ENCODE measurements at regions of chr17 and their contacts with region 1.

Region 1: GRCh38 chr17:57892146-57892828 is 42.4 kb upstream of the MRPS23 start:
- DNase-seq: peak; percentile 77
- ATAC-seq: peak; percentile 98
- H3K4me3 Mint-ChIP-seq: no peak overlapping the region
- H3K27ac Mint-ChIP-seq: no peak overlapping the region
- H3K4me1 Mint-ChIP-seq: no peaks in the 10 kb centered on the region
- H3K27me3 Mint-ChIP-seq: peaks cover 36% of the 10 kb centered on the region
- CTCF ChIP-seq: peak; percentile 62

Region 2: DNA sequence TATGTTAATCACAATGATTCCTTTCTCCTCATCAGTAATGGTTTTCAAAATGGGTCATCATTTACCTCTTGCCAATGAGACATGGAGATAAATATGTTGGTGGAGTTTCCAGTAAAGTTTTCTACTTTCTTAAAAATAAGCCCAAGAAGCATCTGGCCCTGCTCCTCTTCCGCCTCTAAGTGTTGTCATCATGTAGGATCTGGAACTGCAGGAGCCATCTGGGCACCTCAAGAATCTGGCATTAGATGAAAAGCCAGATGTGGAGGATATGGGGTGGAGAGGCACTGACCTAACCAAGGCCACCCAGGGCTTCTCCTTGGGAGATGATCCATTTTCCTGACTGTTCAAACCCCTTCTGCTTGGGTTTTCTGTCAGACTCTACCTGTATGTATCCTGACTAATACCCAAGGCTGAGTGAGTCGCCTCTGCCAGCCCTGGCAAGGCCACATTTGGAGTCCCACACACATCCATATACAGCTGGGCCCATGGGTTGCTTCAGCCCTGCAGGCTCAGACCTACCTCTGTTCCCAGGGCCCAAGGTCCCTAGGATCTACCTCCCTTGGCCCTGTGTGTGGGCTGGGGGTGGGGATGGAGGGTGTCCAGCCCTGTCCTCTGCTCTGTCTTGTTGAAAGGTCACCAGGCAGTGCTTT is 171.8 kb before region 1 on chr17:
- CTCF ChIA-PET with region 1: no interaction called
- POLR2A ChIA-PET with region 1: no interaction called
- intact Hi-C with region 1: no loop called
- DNase-seq: no peak
- ATAC-seq: no peak
- H3K4me3 Mint-ChIP-seq: no peak overlapping the region
- H3K27ac Mint-ChIP-seq: no peak overlapping the region
- H3K4me1 Mint-ChIP-seq: peaks cover 25% of the 10 kb centered on the region
- H3K27me3 Mint-ChIP-seq: peaks cover 14% of the 10 kb centered on the region
- CTCF ChIP-seq: no peak

Region 3: GRCh38 chr17:57861000-57861789 is 31.1 kb before region 1 on chr17:
- CTCF ChIA-PET with region 1: interaction called, 7 read pairs
- POLR2A ChIA-PET with region 1: interaction called, 3 read pairs
- intact Hi-C with region 1: loop called (anchors 2 kb)
- DNase-seq: no peak
- ATAC-seq: peak; percentile 69
- H3K4me3 Mint-ChIP-seq: peak overlapping the region; percentile 79
- H3K27ac Mint-ChIP-seq: no peak overlapping the region
- H3K4me1 Mint-ChIP-seq: peaks cover 14% of the 10 kb centered on the region
- H3K27me3 Mint-ChIP-seq: peaks cover 21% of the 10 kb centered on the region
- CTCF ChIP-seq: no peak

Region 4: GRCh38 chr17:57902800-57903759 is 10.8 kb after region 1 on chr17:
- CTCF ChIA-PET with region 1: interaction called, 10 read pairs
- POLR2A ChIA-PET with region 1: interaction called, 5 read pairs
- intact Hi-C with region 1: no loop called
- DNase-seq: no peak
- ATAC-seq: peak; percentile 19
- H3K4me3 Mint-ChIP-seq: peak overlapping the region; percentile 39
- H3K27ac Mint-ChIP-seq: no peak overlapping the region
- H3K4me1 Mint-ChIP-seq: peaks cover 33% of the 10 kb centered on the region
- H3K27me3 Mint-ChIP-seq: peaks cover 14% of the 10 kb centered on the region
- CTCF ChIP-seq: no peak

Region 5: DNA sequence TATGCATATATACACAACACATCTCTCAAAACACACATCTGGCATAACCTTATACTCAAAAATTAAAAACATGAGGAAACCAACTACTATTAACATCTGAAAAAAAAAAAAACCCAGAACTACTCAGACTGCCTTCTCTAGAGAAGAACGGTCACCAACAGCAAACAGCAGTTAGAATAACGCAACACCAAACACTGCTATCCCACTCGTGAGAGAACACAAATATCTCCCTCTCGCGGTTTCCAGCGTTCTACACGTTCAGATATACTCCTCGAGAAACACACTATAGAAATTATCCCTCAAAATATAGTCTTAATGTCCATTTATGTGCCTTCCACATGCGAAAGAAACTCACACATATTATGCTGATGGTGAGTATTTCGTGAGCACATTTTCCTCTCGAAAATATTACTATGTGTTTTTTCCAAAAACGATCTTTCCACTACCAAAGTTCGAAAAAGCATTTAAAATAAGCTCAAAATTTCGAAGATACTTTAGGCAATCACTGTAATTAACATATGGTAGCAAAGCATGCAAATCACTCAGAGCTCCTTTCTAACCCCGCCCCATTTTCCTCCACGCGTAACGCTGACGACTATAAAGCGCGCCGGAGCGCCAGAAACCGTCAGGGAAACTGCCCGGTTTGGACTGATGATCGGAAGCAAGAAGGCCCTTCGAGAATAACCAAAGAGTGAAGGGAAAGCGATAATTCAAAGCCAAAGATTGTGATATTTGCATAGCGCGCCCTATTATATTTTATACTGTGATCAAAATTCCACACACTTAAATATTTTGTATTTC is 739.4 kb after region 1 on chr17:
- CTCF ChIA-PET with region 1: no interaction called
- POLR2A ChIA-PET with region 1: no interaction called
- intact Hi-C with region 1: no loop called
- DNase-seq: peak; percentile 91
- ATAC-seq: peak; percentile 83
- H3K4me3 Mint-ChIP-seq: no peak overlapping the region
- H3K27ac Mint-ChIP-seq: no peak overlapping the region
- H3K4me1 Mint-ChIP-seq: peaks cover 3% of the 10 kb centered on the region
- H3K27me3 Mint-ChIP-seq: no peaks in the 10 kb centered on the region
- CTCF ChIP-seq: no peak

Measured in activated B cell treated with CpG ODN at 0.5 μM for 24 hours (primary cell).